Colonic mucosa (tissue), 4 donors: ENCODE measurements at regions of chr15 and their contacts with region 1.

Region 1: GRCh38 chr15:49823987-49824538 is 203.2 kb downstream of the DTWD1 start:
- DNase-seq: no peak
- H3K4me3 ChIP-seq: no peak overlapping the region
- H3K27ac ChIP-seq: no peak overlapping the region
- H3K4me1 ChIP-seq: no peaks in the 10 kb centered on the region
- H3K27me3 ChIP-seq: no peaks in the 10 kb centered on the region
- CTCF ChIP-seq: no peak

Region 2: DNA sequence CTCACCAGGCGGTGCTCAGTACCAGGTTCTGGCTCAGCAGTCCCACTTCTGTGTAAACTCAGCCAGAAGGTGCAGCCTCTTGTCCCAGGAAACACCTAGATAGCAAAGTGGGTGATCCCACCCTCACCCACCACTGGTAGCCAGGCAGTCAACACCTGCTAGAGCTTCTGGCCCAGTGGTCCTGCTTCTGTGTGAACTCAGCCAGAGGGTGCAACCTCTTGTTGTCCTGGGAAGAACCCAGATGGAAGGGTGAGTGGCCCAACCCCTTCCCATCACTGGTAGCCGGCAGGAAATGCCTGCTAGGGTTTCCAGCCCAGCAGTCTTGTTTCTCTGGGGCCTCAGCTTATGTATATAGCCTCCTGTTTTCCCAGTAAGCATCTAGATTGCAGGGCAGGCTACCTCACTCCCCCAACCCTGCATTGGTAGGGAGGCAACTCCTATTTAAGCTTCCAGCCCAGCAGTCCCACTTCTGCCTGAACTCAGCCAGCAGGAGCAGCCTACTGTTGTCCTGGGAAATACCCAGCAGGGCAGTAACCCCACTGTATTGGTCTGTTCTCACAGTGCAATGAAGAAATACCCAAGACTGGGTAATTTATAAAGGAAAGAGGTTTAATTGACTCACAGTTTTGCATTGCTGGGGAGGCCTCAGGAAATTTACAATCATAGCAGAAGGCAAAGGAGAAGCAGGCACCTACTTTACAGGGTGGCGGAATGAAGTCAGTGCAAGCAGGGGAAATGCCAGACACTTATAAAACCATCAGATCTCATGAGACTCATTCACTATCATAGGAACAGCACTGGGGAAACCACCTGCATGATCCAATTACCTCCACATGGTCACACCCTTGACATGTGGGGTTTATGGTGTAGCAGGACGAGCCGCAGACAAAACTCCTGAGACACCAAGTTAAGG is 92.6 kb before region 1 on chr15:
- intact Hi-C with region 1: loop called (anchors 10 kb)
- DNase-seq: peak; percentile 46
- H3K4me3 ChIP-seq: no peak overlapping the region
- H3K27ac ChIP-seq: no peak overlapping the region
- H3K4me1 ChIP-seq: peaks cover 6% of the 10 kb centered on the region
- H3K27me3 ChIP-seq: no peaks in the 10 kb centered on the region
- CTCF ChIP-seq: no peak